Sigmoid colon (tissue), 7 donors: ENCODE measurements at regions of chr11 and their contacts with region 1.

Region 1: DNA sequence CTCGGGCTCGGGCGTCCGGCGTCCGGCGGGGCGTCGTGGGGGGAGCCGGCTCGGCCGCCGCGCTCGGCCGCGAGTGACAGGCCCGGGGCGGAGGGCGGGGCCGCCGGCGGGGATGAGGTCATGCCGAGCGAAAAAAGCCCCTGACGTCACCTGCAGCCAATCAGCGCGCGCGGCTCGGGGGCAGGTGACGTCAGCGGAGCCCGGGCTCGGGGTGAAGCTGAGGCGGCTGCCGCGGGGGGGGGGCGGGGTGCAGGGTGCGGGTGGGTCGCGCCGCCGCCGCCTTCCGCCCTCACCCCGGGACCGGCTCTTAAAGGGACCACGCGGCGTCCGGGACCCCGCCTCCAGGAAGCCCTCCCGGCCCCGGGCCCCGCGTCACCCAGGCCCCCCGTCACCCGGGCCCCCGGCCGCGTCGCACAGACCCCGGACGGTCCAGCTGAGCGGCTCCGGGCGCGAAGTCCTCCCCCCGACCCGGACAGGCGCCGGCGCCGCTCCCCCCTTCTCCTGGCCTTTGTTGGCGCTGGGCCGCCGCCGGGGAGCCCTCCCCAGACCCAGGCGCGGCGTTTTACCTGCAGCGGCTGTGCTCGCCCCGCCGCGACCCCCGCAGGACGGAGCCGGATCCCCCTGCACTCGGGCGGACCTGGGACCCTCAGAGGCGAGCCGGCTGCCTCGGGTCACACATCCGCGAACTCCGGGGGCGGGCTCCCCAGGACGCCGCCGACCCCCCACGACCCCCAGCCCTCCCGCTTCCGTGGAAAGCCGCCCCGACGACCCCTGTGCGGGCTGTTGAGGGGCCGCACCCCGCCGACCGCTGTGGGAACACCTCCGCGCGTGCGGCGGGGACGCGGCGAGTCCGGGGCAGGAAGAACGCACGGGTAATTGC is at the start of gene DUSP8:
- DNase-seq: peak; percentile 96
- H3K4me3 ChIP-seq: peak within 1 kb of the TSS; percentile 45 to 77 (median 56)
- H3K27ac ChIP-seq: peak within 1 kb of the TSS; percentile 80 to 99 (median 83)
- H3K4me1 ChIP-seq: peaks cover 0 to 66% (median 58%) of the 10 kb centered on the region in 4 donors
- H3K27me3 ChIP-seq: no peaks in the 10 kb centered on the region
- CTCF ChIP-seq: no peak
- EP300 ChIP-seq: no peak
- POLR2A ChIP-seq: no peak
- total RNA-seq, gene DUSP8: 0.66 to 4.4 (median 2.1) TPM

Region 2: GRCh38 chr11:1202776-1203504 is 369.5 kb before region 1 on chr11:
- intact Hi-C with region 1: loop called (anchors 2 kb)
- DNase-seq: peak; percentile 66
- H3K4me3 ChIP-seq: no peak overlapping the region
- H3K27ac ChIP-seq: no peak overlapping the region
- H3K4me1 ChIP-seq: peaks cover 0 to 7% (median 3%) of the 10 kb centered on the region in 4 donors
- H3K27me3 ChIP-seq: peaks cover 3 to 56% (median 30%) of the 10 kb centered on the region in 3 donors
- CTCF ChIP-seq: peak; percentile 57 to 92 (median 79)
- EP300 ChIP-seq: no peak
- POLR2A ChIP-seq: no peak

Region 3: DNA sequence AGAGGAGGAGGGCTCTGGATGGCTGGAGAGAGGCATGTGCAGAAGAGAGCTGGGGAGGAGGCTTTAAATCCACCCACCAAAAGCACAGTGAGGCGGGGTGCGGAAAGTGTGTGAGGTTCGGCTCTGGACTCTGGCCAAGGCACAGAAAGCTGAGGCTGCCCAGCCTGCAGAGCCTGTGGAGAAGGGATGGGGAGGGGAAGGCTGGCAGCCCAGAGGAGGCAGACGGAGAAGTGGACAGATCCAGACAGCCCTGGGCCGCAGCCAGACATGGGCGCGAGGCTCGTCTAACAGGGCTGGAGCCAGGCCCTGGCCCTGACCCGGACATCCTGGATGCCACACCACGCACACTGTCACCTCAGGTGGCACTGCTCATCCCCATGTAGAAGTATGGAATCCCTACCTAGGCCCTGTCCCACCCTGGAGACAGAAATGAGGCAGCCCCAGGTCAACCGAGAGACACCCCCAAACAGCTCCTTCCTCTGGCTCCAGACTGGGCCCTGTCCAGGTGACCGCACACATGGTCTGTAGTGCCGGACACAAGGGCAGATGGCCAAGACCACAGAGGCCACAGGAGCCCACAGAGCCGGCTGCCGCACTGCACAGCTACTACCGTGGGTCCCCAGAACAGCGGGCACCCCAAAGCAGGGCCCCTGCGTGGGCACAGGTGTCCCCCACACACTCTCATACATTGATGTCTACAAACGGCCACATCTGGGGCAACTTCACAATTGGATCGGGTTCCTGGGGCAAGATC is 69.3 kb before region 1 on chr11:
- intact Hi-C with region 1: no loop called
- DNase-seq: peak; percentile 91
- H3K4me3 ChIP-seq: no peak overlapping the region
- H3K27ac ChIP-seq: peak overlapping the region; percentile 37 to 75 (median 68)
- H3K4me1 ChIP-seq: peaks cover 0 to 75% (median 62%) of the 10 kb centered on the region in 4 donors
- H3K27me3 ChIP-seq: no peaks in the 10 kb centered on the region
- CTCF ChIP-seq: no peak
- EP300 ChIP-seq: no peak
- POLR2A ChIP-seq: no peak

Region 4: DNA sequence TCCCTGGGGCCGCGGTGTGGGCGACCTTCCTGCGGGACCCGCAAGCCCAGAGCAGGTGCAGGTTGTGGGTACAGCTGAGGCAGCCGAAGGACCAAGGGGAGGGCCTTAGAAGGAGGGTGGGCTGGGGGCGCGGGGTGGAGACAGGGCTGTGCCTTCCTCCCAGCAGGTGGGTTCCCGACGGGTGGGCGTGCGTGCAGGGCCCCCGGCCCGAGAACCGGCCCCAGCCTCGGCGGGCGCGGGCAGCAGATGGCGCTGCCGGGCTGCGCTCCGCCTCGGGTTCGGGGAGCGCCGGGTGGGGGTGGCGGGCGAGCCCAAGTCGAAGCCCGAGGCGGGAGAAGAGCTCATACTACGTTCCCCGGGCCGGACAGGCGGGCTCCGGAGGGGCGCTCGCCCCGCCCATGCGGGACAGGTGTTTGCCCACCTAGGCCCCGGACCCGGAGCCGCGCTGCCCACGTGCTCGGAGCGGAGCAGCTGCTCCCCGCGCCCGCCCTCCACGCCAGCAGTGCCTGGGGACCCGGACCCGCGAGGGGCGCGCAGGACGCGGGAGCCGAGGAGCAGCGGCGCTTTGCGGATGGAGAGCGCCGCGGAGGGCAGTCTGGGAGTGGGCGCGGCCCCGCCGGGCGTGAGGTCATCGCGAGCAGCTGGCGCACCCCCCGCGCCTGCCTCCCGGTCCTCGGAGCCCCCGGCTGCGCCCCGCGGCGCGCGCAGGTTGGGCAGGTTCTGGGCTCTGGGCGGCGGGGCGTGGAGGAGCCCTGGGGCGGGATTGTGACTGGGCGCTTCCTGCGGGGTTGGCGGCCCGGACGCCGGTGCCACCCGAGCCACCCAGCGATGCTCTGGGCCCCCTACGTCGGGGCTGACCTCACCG is 25.7 kb before region 1 on chr11:
- intact Hi-C with region 1: loop called (anchors 1 kb)
- DNase-seq: no peak
- H3K4me3 ChIP-seq: peak overlapping the region in 3 of 4 donors; percentile 39 to 51 (median 42)
- H3K27ac ChIP-seq: peak overlapping the region in 3 of 4 donors; percentile 54 to 79 (median 72)
- H3K4me1 ChIP-seq: peaks cover 0 to 31% (median 27%) of the 10 kb centered on the region in 4 donors
- H3K27me3 ChIP-seq: peaks cover 7 to 29% (median 23%) of the 10 kb centered on the region in 3 donors
- CTCF ChIP-seq: peak; percentile 50 to 87 (median 61)
- EP300 ChIP-seq: no peak
- POLR2A ChIP-seq: no peak

Region 5: GRCh38 chr11:1559119-1559951 is 13.1 kb before region 1 on chr11:
- intact Hi-C with region 1: loop called (anchors 1 kb)
- DNase-seq: peak; percentile 99
- H3K4me3 ChIP-seq: peak overlapping the region in 2 of 4 donors; percentile 9 to 10
- H3K27ac ChIP-seq: peak overlapping the region; percentile 92 to 99 (median 95)
- H3K4me1 ChIP-seq: peaks cover 0 to 53% (median 41%) of the 10 kb centered on the region in 4 donors
- H3K27me3 ChIP-seq: no peaks in the 10 kb centered on the region
- CTCF ChIP-seq: peak in 1 of 4 experiments; percentile 19
- EP300 ChIP-seq: peak in 2 of 4 donors; percentile 78 to 89
- POLR2A ChIP-seq: peak in 1 of 2 donors; percentile 13

Region 6: DNA sequence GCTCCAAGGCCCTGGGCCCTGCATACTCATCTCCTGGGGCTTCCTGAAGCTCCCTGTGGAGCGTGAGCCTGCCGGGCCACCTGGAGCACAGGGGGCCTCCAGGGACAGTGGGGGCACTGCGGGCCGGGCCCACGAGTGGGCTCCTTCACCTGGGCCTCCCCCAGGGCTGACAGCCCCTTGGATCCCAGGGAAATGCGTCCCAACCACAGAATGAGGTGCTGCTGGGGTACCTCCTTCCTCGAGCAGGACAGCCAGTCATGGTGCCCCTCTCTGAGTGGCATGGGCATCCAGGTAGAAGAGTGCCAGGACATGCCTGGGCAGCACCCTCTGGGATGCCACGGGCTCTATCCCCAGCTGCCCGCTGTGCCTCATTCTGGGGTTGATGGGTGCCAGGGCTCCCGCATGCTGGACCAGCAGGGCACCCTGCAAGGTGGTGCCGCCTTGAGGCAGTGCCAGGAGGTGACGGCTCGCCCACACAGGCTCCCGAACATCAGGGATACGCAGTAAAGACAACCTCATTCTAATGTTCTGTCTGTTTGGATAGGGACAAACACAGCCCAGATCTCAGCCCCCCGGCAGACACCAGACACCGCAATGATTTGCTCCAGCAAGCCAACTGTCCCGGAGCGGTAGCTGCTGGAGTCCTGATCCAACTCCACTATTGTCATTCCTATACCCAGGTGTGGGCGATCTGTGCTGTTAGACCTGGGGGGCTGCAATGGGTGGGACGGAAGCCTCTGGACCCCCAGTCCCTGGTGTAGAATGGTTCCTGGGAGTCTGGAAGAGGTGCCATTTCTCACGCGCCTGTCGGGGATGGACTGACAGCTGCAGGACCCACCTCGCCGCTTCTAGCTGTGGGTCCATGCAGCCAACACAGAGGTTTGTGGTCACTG is 83.0 kb after region 1 on chr11:
- intact Hi-C with region 1: no loop called
- DNase-seq: no peak
- H3K4me3 ChIP-seq: no peak overlapping the region
- H3K27ac ChIP-seq: no peak overlapping the region
- H3K4me1 ChIP-seq: peaks cover 0 to 5% (median 4%) of the 10 kb centered on the region in 4 donors
- H3K27me3 ChIP-seq: peaks cover 0 to 26% (median 0%) of the 10 kb centered on the region in 3 donors
- CTCF ChIP-seq: no peak
- EP300 ChIP-seq: no peak
- POLR2A ChIP-seq: no peak